Activated CD8-positive, alpha-beta T cell treated with anti-CD3 and anti-CD28 coated beads, Interleukin-2, amount 10 ng/mL, durations not matched to agents 7 days and 5 days (primary cell): ENCODE measurements at regions of chr11 and their contacts with region 1.

Region 1: DNA sequence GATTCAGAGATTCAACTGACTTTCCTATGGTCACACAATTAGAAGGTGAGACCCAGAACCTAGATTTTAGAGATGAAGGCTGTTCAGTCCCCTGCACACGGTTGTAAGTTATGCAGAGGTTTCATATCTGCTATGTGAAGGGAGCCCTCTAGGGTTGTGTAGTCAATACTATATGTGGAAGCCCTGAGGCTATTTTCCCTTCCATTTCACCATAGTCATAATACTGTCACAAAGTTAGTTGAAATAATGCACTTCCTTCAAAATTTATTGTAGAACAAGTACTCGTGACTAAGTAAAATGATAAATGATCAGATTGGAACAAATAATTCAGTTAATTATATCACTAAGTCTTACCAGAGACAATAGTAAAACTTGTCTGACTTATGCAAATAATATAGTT is 48.8 kb downstream of the ENDOD1 start:
- DNase-seq: no peak
- ATAC-seq: peak; percentile 74
- H3K4me3 Mint-ChIP-seq: no peak overlapping the region
- H3K27ac Mint-ChIP-seq: no peak overlapping the region
- H3K4me1 Mint-ChIP-seq: peaks cover 14% of the 10 kb centered on the region
- H3K27me3 Mint-ChIP-seq: peaks cover 13% of the 10 kb centered on the region

Region 2: GRCh38 chr11:95050595-95051202 is 87.7 kb before region 1 on chr11:
- CTCF ChIA-PET with region 1: no interaction called
- POLR2A ChIA-PET with region 1: no interaction called
- DNase-seq: peak; percentile 19
- ATAC-seq: no peak
- H3K4me3 Mint-ChIP-seq: no peak overlapping the region
- H3K27ac Mint-ChIP-seq: no peak overlapping the region
- H3K4me1 Mint-ChIP-seq: no peaks in the 10 kb centered on the region
- H3K27me3 Mint-ChIP-seq: peaks cover 37% of the 10 kb centered on the region

Region 3: GRCh38 chr11:95076416-95076815 is 62.0 kb before region 1 on chr11:
- CTCF ChIA-PET with region 1: interaction called, 71 read pairs
- POLR2A ChIA-PET with region 1: no interaction called
- DNase-seq: peak; percentile 9
- ATAC-seq: no peak
- H3K4me3 Mint-ChIP-seq: no peak overlapping the region
- H3K27ac Mint-ChIP-seq: no peak overlapping the region
- H3K4me1 Mint-ChIP-seq: peaks cover 14% of the 10 kb centered on the region
- H3K27me3 Mint-ChIP-seq: peaks cover 4% of the 10 kb centered on the region

Region 4: DNA sequence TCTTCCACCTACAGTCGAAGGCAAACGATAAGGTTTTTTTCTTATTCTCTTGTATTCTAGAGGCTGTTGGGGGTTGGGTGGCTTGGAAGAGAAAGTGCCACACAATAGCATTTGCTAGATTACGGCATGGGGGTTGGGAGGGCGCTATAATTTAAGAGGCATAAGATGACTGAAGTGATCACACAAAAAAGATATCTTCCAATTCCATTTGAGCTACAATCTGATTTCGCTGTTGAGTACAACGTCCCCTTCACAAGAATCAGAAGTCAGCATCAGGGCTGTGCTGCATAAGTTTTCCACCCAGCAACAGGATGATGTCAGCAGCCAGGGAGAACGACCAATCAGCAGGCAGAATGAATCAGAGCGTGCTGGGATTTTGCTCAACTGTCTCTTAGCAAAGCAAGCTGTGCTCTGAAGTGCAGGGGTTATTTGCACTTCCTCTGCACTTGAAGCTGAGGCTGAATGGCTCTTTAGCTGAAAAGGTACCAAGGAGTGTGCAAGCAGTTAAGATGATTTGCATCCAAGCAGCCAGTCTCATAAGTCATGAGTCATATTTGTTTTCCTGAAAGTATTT is 115.8 kb after region 1 on chr11:
- CTCF ChIA-PET with region 1: no interaction called
- POLR2A ChIA-PET with region 1: no interaction called
- DNase-seq: peak; percentile 91
- ATAC-seq: peak; percentile 100
- H3K4me3 Mint-ChIP-seq: peak overlapping the region; percentile 76
- H3K27ac Mint-ChIP-seq: peak overlapping the region; percentile 79
- H3K4me1 Mint-ChIP-seq: peaks cover 42% of the 10 kb centered on the region
- H3K27me3 Mint-ChIP-seq: peaks cover 2% of the 10 kb centered on the region